GM12878 (cell line): ENCODE measurements at regions of chr3 and their contacts with region 1.

Region 1: DNA sequence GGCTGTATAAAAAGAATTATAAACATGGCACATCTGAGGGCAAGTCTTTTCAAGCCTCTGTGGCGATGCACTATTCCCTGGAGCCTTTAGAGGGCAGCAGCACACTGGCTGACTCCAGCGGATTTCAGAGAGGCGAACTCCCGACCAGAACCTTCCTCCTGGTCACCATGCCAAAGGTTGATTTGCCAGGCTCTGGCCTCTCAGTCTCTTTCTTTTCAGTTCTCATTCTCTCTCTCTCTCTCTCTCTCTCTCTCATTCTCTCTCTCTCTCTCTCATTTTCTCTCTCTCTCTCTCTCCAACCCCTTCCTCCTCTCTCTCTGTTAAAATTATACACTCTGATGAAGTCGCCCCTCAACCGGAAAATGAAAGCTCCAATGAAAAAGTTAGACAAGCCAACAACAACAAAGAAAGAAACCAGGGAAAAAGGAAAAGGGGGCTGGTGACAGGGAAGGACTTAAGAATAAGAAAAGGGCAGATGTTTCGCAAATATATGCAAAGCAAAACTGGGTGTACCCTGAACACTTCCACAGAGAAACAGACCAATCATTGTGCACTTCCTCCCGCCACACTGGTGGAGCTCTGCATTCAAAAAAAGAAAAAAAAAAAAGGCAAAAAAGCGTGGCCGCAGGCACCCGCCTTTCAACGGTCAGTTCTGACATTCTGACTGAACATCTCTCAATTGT is 90.2 kb downstream of the TIGIT start:
- DNase-seq: peak; percentile 25
- ATAC-seq: peak; percentile 99
- H3K4me3 ChIP-seq: no peak overlapping the region
- H3K27ac ChIP-seq: no peak overlapping the region
- H3K4me1 ChIP-seq: 0 out of 2 replicates have a peak, but pooled peaks cover under 1% of the 10 kb centered on the region
- H3K27me3 ChIP-seq: no peaks in the 10 kb centered on the region
- CTCF ChIP-seq: peak; percentile 93 to 95 (median 93)
- EP300 ChIP-seq: no peak
- POLR2A ChIP-seq: no peak
- RAD21 ChIP-seq: peak; percentile 98

Region 2: DNA sequence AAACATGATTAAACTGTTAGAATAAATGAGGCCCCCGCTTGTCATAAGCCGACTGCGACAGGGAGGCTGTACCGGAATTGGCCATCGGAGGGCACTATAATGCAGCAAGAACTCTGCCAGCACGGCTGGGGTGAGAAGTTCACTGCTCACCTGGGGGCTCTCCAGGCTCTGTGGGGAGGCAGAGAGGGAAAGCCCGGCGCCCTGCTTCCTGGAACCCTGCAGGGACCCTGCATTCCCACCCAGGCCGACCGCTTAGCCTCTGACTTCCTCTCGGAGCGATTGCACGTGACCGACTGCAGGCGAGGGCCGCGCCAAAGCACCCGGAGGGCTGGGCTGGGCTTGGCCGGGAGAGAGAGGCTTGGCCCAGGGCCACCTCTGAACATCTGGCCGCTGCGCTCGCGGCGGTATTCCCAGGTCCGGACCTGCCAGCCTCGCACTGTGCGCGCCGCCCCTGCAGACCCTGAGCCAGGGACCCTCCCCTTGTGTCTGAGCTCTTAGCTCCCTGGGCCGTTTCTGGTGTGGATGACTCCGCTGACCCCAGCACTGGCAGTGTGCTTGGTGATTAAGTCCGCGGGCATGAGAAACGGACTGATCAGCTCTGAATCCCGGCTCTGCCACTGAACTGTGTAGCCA is 231.4 kb before region 1 on chr3:
- CTCF ChIA-PET with region 1: interaction called, 12 read pairs
- POLR2A ChIA-PET with region 1: no interaction called
- RAD21 ChIA-PET with region 1: no interaction called
- SMC1A ChIA-PET with region 1: interaction called, 3 read pairs
- in situ Hi-C with region 1: no loop called
- intact Hi-C with region 1: no loop called
- DNase-seq: peak; percentile 33
- ATAC-seq: peak; percentile 94
- H3K4me3 ChIP-seq: peak overlapping the region; percentile 45; the same call in 1 of the 2 replicates
- H3K27ac ChIP-seq: no peak overlapping the region
- H3K4me1 ChIP-seq: no peaks in the 10 kb centered on the region; the same call in 1 of the 2 replicates
- H3K27me3 ChIP-seq: 0 out of 4 replicates have a peak, but pooled peaks cover 0 to 1% of the 10 kb centered on the region in 2 experiments
- CTCF ChIP-seq: peak; percentile 86 to 95 (median 94)
- EP300 ChIP-seq: 0 out of 4 replicates have a peak, but pooled peaks of 1 of the 2 experiments have one; percentile 3
- POLR2A ChIP-seq: no peak
- RAD21 ChIP-seq: peak; percentile 93

Region 3: GRCh38 chr3:114405202-114405990 is 21.4 kb after region 1 on chr3:
- CTCF ChIA-PET with region 1: interaction called, 223 read pairs
- POLR2A ChIA-PET with region 1: no interaction called
- RAD21 ChIA-PET with region 1: interaction called, 9 read pairs
- SMC1A ChIA-PET with region 1: interaction called, 14 read pairs
- in situ Hi-C with region 1: no loop called
- intact Hi-C with region 1: no loop called
- DNase-seq: no peak
- ATAC-seq: peak; percentile 83
- H3K4me3 ChIP-seq: no peak overlapping the region
- H3K27ac ChIP-seq: no peak overlapping the region
- H3K4me1 ChIP-seq: peaks cover 3% of the 10 kb centered on the region; the same call in 1 of the 2 replicates
- H3K27me3 ChIP-seq: no peaks in the 10 kb centered on the region
- CTCF ChIP-seq: no peak
- EP300 ChIP-seq: no peak
- POLR2A ChIP-seq: no peak
- RAD21 ChIP-seq: no peak

Region 4: GRCh38 chr3:114432310-114432709 is 48.3 kb after region 1 on chr3:
- CTCF ChIA-PET with region 1: interaction called, 12 read pairs
- POLR2A ChIA-PET with region 1: no interaction called
- RAD21 ChIA-PET with region 1: no interaction called
- SMC1A ChIA-PET with region 1: interaction called, 3 read pairs
- in situ Hi-C with region 1: no loop called
- intact Hi-C with region 1: no loop called
- DNase-seq: no peak
- ATAC-seq: no peak
- H3K4me3 ChIP-seq: no peak overlapping the region
- H3K27ac ChIP-seq: no peak overlapping the region
- H3K4me1 ChIP-seq: peaks cover 13% of the 10 kb centered on the region
- H3K27me3 ChIP-seq: no peaks in the 10 kb centered on the region
- CTCF ChIP-seq: no peak
- EP300 ChIP-seq: no peak
- POLR2A ChIP-seq: no peak
- RAD21 ChIP-seq: no peak

Region 5: DNA sequence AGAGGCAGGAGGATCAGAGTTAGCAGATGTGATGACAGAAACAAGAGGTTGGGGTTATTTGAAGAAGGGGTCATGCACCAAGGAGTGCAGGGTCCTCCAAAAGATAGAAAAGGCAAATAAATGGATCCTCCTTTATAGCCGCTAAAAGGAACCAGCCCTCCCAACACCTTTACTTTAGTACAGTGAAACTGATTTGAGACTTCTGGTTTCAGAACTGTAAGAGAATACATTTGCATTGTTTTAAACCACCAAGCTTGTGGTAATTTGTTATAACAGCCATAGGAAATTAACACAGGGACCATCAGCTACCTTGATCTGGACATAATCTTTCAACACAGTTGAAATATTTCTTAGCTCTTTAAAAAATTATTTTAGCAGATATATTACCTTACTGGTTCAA is 76.4 kb after region 1 on chr3:
- CTCF ChIA-PET with region 1: interaction called, 11 read pairs
- POLR2A ChIA-PET with region 1: no interaction called
- RAD21 ChIA-PET with region 1: interaction called, 4 read pairs
- SMC1A ChIA-PET with region 1: interaction called, 3 read pairs
- in situ Hi-C with region 1: no loop called
- intact Hi-C with region 1: no loop called
- DNase-seq: no peak
- ATAC-seq: peak; percentile 48
- H3K4me3 ChIP-seq: peak overlapping the region; percentile 24; the same call in 1 of the 2 replicates
- H3K27ac ChIP-seq: no peak overlapping the region
- H3K4me1 ChIP-seq: peaks cover 53% of the 10 kb centered on the region
- H3K27me3 ChIP-seq: no peaks in the 10 kb centered on the region
- CTCF ChIP-seq: no peak
- EP300 ChIP-seq: no peak
- POLR2A ChIP-seq: no peak
- RAD21 ChIP-seq: no peak

Region 6: DNA sequence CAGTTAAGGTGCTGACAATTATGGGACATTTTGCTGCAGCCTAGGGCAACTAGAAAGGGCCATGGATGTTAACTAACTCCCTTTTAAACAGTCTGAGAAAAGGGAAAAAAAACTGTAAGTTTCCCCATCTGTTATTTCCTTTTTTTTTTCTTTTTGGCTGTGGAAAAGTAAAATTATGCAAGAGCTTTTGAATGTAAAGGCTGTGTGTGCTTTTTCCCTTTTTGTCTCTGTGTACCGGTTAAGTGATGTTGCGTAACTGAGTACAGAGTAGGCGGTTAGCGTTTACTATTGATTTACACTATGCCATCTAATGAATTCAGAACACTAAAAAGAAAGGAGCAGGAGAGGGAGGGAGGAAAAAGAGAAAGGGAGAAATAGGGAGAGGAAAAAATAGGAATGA is 313.4 kb after region 1 on chr3:
- CTCF ChIA-PET with region 1: no interaction called
- POLR2A ChIA-PET with region 1: no interaction called
- RAD21 ChIA-PET with region 1: no interaction called
- SMC1A ChIA-PET with region 1: no interaction called
- in situ Hi-C with region 1: no loop called
- intact Hi-C with region 1: loop called (anchors 10 kb)
- DNase-seq: no peak
- ATAC-seq: no peak
- H3K4me3 ChIP-seq: no peak overlapping the region
- H3K27ac ChIP-seq: no peak overlapping the region
- H3K4me1 ChIP-seq: no peaks in the 10 kb centered on the region
- H3K27me3 ChIP-seq: no peaks in the 10 kb centered on the region
- CTCF ChIP-seq: no peak
- EP300 ChIP-seq: no peak
- POLR2A ChIP-seq: no peak
- RAD21 ChIP-seq: no peak

Region 7: GRCh38 chr3:114745322-114746240 is 361.6 kb after region 1 on chr3:
- CTCF ChIA-PET with region 1: no interaction called
- POLR2A ChIA-PET with region 1: no interaction called
- RAD21 ChIA-PET with region 1: no interaction called
- SMC1A ChIA-PET with region 1: no interaction called
- in situ Hi-C with region 1: no loop called
- intact Hi-C with region 1: no loop called
- DNase-seq: no peak
- ATAC-seq: no peak; the same call in 2 of the 3 replicates
- H3K4me3 ChIP-seq: no peak overlapping the region
- H3K27ac ChIP-seq: no peak overlapping the region
- H3K4me1 ChIP-seq: peaks cover 7% of the 10 kb centered on the region; the same call in 1 of the 2 replicates
- H3K27me3 ChIP-seq: no peaks in the 10 kb centered on the region
- CTCF ChIP-seq: no peak
- EP300 ChIP-seq: no peak
- POLR2A ChIP-seq: no peak
- RAD21 ChIP-seq: no peak

Region 8: DNA sequence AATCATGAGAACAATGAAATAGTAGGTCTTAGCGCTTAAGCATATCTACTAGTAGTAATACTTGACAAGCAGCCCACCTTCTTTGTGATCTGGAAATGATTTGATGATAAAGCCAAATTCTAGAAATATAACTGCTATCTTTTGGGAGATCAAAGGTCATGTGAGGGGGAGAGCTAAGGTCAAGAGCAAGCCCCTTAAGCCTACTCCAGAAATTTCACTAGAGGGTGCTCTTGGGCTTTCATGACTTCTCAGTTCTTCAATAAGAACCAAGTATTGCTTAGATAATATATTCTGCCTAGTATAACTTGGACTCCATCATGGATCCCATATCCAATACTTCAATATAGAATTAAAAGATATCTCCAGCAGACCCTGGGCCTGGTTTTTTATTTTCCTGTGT is 443.5 kb after region 1 on chr3:
- CTCF ChIA-PET with region 1: no interaction called
- POLR2A ChIA-PET with region 1: no interaction called
- RAD21 ChIA-PET with region 1: no interaction called
- SMC1A ChIA-PET with region 1: no interaction called
- in situ Hi-C with region 1: no loop called
- intact Hi-C with region 1: loop called (anchors 5 kb)
- DNase-seq: peak; percentile 16
- ATAC-seq: peak; percentile 92
- H3K4me3 ChIP-seq: no peak overlapping the region
- H3K27ac ChIP-seq: no peak overlapping the region
- H3K4me1 ChIP-seq: no peaks in the 10 kb centered on the region
- H3K27me3 ChIP-seq: no peaks in the 10 kb centered on the region
- CTCF ChIP-seq: peak; percentile 59 to 69 (median 61); a peak in 5 of 6 replicates
- EP300 ChIP-seq: no peak
- POLR2A ChIP-seq: no peak
- RAD21 ChIP-seq: peak; percentile 84

Region 9: DNA sequence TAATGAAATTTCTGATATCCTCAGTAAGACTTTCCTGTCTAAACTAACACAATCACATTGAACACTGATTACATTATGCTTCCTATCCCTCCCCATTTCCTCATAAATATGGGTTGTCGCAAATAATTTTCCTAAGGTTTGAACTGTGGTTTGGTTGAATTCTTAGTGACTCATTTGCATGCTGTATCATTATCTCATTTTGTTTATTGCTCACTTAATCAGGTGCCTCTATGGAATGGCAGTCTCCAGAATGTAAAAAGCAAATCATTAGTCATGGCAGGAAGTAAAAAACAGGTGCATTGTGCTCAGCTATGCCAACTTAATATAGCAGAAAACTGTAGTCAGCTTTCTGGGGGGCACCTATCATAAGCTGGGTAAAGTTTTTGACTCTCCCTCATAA is 979.1 kb after region 1 on chr3:
- CTCF ChIA-PET with region 1: no interaction called
- POLR2A ChIA-PET with region 1: no interaction called
- RAD21 ChIA-PET with region 1: no interaction called
- SMC1A ChIA-PET with region 1: no interaction called
- in situ Hi-C with region 1: no loop called
- intact Hi-C with region 1: no loop called
- DNase-seq: no peak
- ATAC-seq: no peak
- H3K4me3 ChIP-seq: no peak overlapping the region
- H3K27ac ChIP-seq: no peak overlapping the region
- H3K4me1 ChIP-seq: 0 out of 2 replicates have a peak, but pooled peaks cover 3% of the 10 kb centered on the region
- H3K27me3 ChIP-seq: no peaks in the 10 kb centered on the region
- CTCF ChIP-seq: no peak
- EP300 ChIP-seq: no peak
- POLR2A ChIP-seq: no peak
- RAD21 ChIP-seq: no peak